Ascending aorta (tissue), 2 donors: ENCODE measurements at regions of chr15 and their contacts with region 1.

Region 1: DNA sequence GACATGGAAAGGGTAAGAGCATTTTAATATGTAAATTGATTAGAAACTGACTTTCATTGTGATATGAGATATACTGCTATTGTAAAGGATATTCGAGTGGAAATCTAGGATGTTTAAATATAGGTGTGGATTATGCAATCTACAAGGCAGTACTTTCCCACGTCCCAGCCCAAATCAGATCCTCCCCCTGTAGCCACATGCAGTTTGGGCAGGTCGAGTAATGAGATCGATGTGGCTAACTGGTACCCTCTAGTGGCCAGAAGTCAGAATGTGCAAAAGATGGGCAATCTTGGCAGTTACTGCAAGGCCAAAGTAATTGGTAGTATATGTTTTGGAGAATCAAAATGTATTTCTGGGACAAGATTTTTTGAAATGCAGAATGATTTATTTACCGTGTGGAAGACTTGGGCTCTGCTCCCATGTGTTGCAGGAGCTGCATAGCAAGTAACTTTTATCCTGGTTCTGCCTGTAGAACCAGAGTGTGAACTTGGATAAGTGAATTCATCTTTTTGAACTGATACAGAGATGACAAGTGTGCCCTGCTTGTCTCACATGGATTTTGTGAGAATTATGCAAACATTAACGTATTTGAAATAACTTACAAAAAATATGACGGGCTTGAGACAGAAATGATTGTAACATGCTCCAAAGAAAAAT is 94.5 kb upstream of the ADAMTSL3 start:
- DNase-seq: peak in 1 of 2 donors; percentile 72
- H3K4me3 ChIP-seq: no peak overlapping the region
- H3K27ac ChIP-seq: no peak overlapping the region
- H3K4me1 ChIP-seq: no peaks in the 10 kb centered on the region
- H3K27me3 ChIP-seq: no peaks in the 10 kb centered on the region
- CTCF ChIP-seq: peak; percentile 61 to 78 (median 69)

Region 2: GRCh38 chr15:83248151-83249029 is 311.0 kb before region 1 on chr15:
- intact Hi-C with region 1: loop called (anchors 5 kb)
- DNase-seq: no peak
- H3K4me3 ChIP-seq: no peak overlapping the region
- H3K27ac ChIP-seq: no peak overlapping the region
- H3K4me1 ChIP-seq: no peaks in the 10 kb centered on the region
- H3K27me3 ChIP-seq: no peaks in the 10 kb centered on the region
- CTCF ChIP-seq: peak; percentile 52 to 91 (median 91)

Region 3: GRCh38 chr15:83436458-83437158 is 122.8 kb before region 1 on chr15:
- intact Hi-C with region 1: loop called (anchors 1 kb)
- DNase-seq: no peak
- H3K4me3 ChIP-seq: no peak overlapping the region
- H3K27ac ChIP-seq: no peak overlapping the region
- H3K4me1 ChIP-seq: no peaks in the 10 kb centered on the region
- H3K27me3 ChIP-seq: no peaks in the 10 kb centered on the region
- CTCF ChIP-seq: peak in 1 of 3 experiments; percentile 27